Ovary (tissue), 10 donors: ENCODE measurements at regions of chr12 and their contacts with region 1.

Region 1: GRCh38 chr12:95582230-95583058 is 31.2 kb upstream of the USP44 start:
- DNase-seq: no peak
- H3K4me3 ChIP-seq: no peak overlapping the region
- H3K27ac ChIP-seq: no peak overlapping the region
- H3K4me1 ChIP-seq: no peaks in the 10 kb centered on the region
- H3K27me3 ChIP-seq: no peaks in the 10 kb centered on the region
- CTCF ChIP-seq: peak; percentile 34 to 65 (median 56)
- EP300 ChIP-seq: no peak
- POLR2A ChIP-seq: no peak

Region 2: DNA sequence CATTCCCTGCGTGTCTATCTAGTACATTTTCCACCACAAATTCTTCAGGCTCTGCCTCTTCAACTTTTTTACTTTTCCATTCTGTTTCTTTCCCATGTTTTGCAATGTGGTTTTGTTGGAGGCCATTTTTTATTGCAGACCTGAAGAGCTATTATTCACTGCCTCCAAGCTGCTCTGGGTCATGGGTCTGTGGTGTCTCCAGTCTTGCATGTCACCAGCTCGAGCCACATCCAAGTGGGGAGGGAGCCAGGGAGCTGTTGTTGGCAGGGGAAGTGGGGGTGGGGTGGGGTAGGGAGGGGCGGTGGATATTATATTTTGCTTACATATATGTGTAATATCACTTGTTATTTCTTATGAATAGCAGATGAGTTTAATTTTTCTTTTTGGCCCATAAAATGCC is 295.7 kb before region 1 on chr12:
- intact Hi-C with region 1: no loop called
- DNase-seq: no peak
- H3K4me3 ChIP-seq: no peak overlapping the region
- H3K27ac ChIP-seq: no peak overlapping the region
- H3K4me1 ChIP-seq: no peaks in the 10 kb centered on the region
- H3K27me3 ChIP-seq: no peaks in the 10 kb centered on the region
- CTCF ChIP-seq: no peak
- EP300 ChIP-seq: no peak
- POLR2A ChIP-seq: no peak

Region 3: GRCh38 chr12:95998611-95999286 is 416.3 kb after region 1 on chr12:
- intact Hi-C with region 1: loop called in 1 of 4 experiments (anchors 10 kb)
- DNase-seq: peak in 1 of 5 donors; percentile 24
- H3K4me3 ChIP-seq: no peak overlapping the region
- H3K27ac ChIP-seq: no peak overlapping the region
- H3K4me1 ChIP-seq: no peaks in the 10 kb centered on the region
- H3K27me3 ChIP-seq: no peaks in the 10 kb centered on the region
- CTCF ChIP-seq: peak in 1 of 3 donors; percentile 32
- EP300 ChIP-seq: no peak
- POLR2A ChIP-seq: no peak